Panc1 (cell line): ENCODE measurements at regions of chr7 and their contacts with region 1.

Region 1: DNA sequence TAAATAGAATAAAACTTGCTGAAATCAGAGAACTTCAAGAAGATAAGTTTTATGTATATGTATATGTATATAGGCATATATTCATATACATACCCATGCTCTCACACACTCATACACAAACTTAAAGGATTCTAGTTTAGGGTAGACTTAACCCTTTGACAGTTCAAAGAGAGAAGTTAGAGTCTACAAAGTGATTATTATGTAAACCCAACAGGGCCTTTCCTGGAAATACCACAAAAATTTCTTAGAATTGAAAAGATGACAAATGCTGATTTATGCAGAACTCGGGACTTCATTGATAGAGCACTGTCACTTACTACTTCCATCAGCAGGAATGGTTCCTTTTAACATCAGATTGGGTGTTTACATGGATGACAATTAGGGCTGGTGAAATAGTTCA is 763.5 kb downstream of the AUTS2 start:
- DNase-seq: no peak
- ATAC-seq: no peak
- H3K4me3 ChIP-seq: no peak overlapping the region
- H3K27ac ChIP-seq: no peak overlapping the region
- H3K4me1 ChIP-seq: no peaks in the 10 kb centered on the region
- H3K27me3 ChIP-seq: peaks cover 2% of the 10 kb centered on the region
- CTCF ChIP-seq: no peak

Region 2: GRCh38 chr7:70349819-70350218 is 12.0 kb before region 1 on chr7:
- CTCF ChIA-PET with region 1: no interaction called
- POLR2A ChIA-PET with region 1: no interaction called
- in situ Hi-C with region 1: no loop called
- intact Hi-C with region 1: loop called (anchors 1 kb)
- DNase-seq: no peak
- ATAC-seq: no peak
- H3K4me3 ChIP-seq: no peak overlapping the region
- H3K27ac ChIP-seq: no peak overlapping the region
- H3K4me1 ChIP-seq: no peaks in the 10 kb centered on the region
- H3K27me3 ChIP-seq: no peaks in the 10 kb centered on the region
- CTCF ChIP-seq: no peak